ENCODE measurements at regions of chr12 and their contacts with region 1.

Region 1: DNA sequence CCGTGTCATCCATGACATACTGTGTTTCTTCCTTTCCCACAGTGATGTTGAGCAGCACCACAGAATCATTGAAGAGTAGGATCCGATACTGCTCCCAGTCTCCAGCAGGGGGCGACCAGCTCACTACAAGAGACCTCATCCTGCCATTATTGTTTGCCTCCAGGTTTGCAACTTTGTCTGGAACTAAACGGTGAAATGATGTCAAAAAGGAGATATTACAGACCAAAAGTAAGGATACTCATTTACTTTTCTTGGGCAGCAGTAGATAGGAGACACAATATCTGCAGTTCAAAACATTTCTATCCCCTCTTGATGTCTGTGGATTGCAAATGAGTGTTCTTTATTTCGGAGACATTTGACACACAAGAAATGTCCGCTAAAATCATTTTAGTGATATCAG is 47.2 kb downstream of the PTPRB start:
- DNase-seq: peak; percentile 75
- H3K4me3 ChIP-seq: no peak overlapping the region
- CTCF ChIP-seq: peak; percentile 85

Region 2: GRCh38 chr12:69879041-69879960 is 710.8 kb before region 1 on chr12:
- in situ Hi-C with region 1: loop called (anchors 25 kb)
- DNase-seq: peak; percentile 66
- H3K4me3 ChIP-seq: no peak overlapping the region
- CTCF ChIP-seq: peak; percentile 87

Region 3: DNA sequence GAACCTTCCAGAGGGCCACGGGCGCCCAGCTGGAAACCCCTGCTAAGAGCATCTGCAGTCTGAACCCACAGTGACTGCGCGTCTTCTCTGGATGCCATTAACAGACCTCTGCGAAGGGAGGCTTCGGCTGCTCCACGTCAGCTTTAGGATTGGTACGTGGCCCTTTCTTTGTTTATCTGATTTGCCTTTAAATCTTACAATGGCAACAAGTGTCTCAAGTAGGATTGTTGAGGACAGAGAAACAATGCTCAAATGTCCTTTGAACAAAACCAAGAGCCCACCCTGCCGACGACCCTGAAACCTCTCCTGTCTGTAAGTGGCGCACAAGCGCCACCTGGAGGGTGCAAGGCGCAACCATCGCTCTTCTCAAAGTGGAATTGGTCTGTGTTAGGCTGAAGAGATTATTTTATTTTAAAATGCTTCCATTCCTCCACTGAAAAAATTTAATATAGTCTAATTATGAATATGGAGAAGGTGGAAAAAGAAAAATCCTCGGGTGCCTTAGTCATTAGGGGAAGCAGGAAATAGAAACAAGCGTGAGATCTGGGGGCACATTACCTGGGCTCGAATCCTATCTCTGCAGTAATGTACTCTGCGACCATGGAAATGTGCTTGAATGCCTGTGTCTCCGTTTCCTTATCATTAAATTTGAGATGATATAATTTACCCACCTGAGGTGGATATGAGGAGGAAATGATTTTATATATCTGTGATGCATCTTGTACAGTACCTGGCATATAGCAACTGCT is 129.8 kb after region 1 on chr12:
- in situ Hi-C with region 1: loop called (anchors 25 kb)
- DNase-seq: peak; percentile 13
- H3K4me3 ChIP-seq: peak overlapping the region; percentile 38
- CTCF ChIP-seq: peak; percentile 99

Measured in astrocyte of the cerebellum (primary cell).